Endothelial cell of umbilical vein (primary cell): ENCODE measurements at regions of chr18 and their contacts with region 1.

Region 1: DNA sequence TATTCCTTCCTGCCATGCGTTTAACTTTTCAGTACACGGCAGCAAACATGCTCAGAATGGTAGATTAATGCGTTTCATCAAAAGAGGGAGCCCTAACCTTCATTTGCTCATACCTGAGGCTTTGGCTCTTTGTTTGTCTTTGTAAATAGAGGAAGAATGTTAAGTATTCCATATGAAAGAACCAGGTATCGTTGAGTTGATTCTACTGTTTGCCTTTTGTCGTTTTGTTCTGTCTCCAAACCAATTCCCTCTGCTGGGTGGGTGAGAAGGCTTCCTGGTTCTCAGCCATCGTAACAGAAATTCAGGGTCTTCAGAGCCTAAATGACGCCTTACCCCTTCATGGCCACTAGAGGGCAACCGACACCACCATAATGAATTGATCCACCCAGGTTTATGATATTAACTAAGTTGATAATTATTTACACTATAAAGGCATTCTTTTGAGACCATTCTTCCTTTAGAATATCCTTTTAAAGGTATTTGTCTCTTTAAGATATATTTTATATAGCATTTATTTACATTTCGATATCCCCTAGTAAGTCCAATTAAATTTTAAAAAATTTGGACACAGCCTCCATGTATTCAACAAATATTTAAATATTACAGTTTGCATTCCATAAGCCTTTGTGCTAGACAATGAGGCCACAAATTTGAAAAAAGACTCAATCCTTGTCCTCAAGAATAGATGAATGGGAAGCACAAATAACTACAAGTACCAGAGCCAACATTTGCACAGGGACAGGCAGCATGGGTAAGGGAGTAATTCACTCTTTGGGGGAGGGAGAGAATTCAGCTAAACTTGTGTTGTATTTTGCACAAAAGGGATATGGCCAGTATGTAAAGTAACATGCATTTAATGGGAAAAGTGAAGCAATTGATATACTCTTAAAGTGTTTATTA is 48.1 kb downstream of the TIMM21 start:
- DNase-seq: peak; percentile 78
- H3K4me3 ChIP-seq: peak overlapping the region in 2 of 3 experiments; percentile 14 to 48
- H3K27ac ChIP-seq: no peak overlapping the region
- H3K4me1 ChIP-seq: no peaks in the 10 kb centered on the region
- H3K27me3 ChIP-seq: peaks cover 0 to 3% of the 10 kb centered on the region in 2 experiments
- CTCF ChIP-seq: peak; percentile 62 to 86
- POLR2A ChIP-seq: no peak

Region 2: DNA sequence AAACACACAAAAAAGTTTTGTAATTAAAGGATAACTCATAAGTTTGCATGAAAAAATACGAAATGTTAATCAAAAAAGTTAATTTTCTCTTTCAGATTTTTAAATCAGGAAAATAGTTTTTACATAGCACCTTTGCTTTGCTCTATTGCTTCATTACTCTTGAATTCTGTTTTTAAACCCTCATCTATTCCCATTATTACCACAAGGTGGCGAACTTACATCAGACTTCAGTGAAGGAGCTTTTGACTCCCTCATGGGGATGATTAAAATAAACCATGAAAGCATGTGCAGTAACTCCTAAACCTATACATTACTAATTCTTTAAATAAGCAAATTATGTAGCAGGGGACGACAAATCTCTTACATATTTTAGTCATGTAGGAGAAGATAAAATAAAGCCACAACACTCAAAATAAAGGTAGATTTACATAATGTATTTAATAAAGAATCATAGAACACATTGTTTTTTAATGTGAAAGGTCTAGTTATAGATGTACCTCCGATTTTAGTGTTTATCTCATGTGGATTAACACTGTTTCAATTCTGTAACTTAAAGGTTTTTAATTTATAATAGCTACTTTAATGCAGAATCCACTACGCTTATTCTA is 1433.9 kb before region 1 on chr18:
- CTCF ChIA-PET with region 1: interaction called, 3 read pairs
- POLR2A ChIA-PET with region 1: no interaction called
- dilution Hi-C with region 1: no loop called
- intact Hi-C with region 1: loop called (anchors 1 kb)
- DNase-seq: peak; percentile 36
- H3K4me3 ChIP-seq: no peak overlapping the region
- H3K27ac ChIP-seq: no peak overlapping the region
- H3K4me1 ChIP-seq: no peaks in the 10 kb centered on the region
- H3K27me3 ChIP-seq: no peaks in the 10 kb centered on the region
- CTCF ChIP-seq: peak; percentile 33 to 42
- POLR2A ChIP-seq: no peak

Region 3: DNA sequence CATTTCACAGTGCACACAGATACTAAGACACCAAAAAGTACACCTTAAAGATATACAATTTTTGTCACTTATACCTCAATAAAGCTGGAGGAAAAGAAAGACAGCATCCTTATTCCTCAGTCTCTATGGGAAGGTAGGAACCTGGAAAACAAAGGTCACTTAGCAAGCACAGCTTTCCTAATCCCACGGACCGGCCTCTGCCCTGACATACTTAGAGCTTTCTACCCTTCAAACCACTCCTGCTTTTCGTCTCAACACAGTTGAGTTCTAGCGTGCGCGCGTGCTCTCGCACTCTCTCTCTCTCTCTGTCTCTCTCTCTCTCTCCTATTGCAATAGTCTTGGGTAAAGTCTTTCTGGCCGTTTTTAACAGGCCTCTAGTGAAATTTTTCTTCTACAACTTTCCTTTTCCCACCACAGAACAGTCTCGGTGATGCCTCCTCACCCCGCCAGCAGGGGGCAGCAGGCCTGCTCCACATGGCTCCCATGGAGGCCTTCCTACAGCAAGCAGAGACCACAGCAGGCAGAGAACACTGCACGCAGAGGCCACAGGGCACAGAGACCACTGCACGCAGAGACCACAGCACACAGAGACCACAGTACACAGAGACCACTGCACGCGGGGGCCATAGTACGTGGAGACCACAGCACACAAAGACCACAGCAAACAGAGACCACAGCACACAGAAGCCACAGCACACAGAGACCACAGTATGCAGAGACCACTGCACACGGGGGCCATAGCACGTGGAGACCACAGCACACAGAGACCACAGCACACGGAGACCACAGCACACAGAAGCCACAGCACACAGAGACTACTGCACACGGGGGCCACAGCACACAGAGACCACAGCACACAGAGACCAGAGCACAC is 155.8 kb before region 1 on chr18:
- CTCF ChIA-PET with region 1: no interaction called
- POLR2A ChIA-PET with region 1: no interaction called
- dilution Hi-C with region 1: no loop called
- intact Hi-C with region 1: no loop called
- DNase-seq: no peak
- H3K4me3 ChIP-seq: no peak overlapping the region
- H3K27ac ChIP-seq: no peak overlapping the region
- H3K4me1 ChIP-seq: no peaks in the 10 kb centered on the region
- H3K27me3 ChIP-seq: no peaks in the 10 kb centered on the region
- CTCF ChIP-seq: no peak
- POLR2A ChIP-seq: no peak

Region 4: GRCh38 chr18:74139411-74139810 is 57.1 kb before region 1 on chr18:
- CTCF ChIA-PET with region 1: no interaction called
- POLR2A ChIA-PET with region 1: no interaction called
- dilution Hi-C with region 1: no loop called
- intact Hi-C with region 1: no loop called
- DNase-seq: no peak
- H3K4me3 ChIP-seq: no peak overlapping the region
- H3K27ac ChIP-seq: no peak overlapping the region
- H3K4me1 ChIP-seq: no peaks in the 10 kb centered on the region
- H3K27me3 ChIP-seq: no peaks in the 10 kb centered on the region
- CTCF ChIP-seq: no peak
- POLR2A ChIP-seq: no peak

Region 5: GRCh38 chr18:74217476-74218143 is 21.1 kb after region 1 on chr18:
- CTCF ChIA-PET with region 1: no interaction called
- POLR2A ChIA-PET with region 1: no interaction called
- dilution Hi-C with region 1: no loop called
- intact Hi-C with region 1: no loop called
- DNase-seq: no peak
- H3K4me3 ChIP-seq: no peak overlapping the region
- H3K27ac ChIP-seq: no peak overlapping the region
- H3K4me1 ChIP-seq: no peaks in the 10 kb centered on the region
- H3K27me3 ChIP-seq: no peaks in the 10 kb centered on the region
- CTCF ChIP-seq: no peak
- POLR2A ChIP-seq: no peak

Region 6: GRCh38 chr18:74337155-74337911 is 140.9 kb after region 1 on chr18:
- CTCF ChIA-PET with region 1: interaction called, 130 read pairs
- POLR2A ChIA-PET with region 1: no interaction called
- dilution Hi-C with region 1: no loop called
- intact Hi-C with region 1: loop called (anchors 1 kb)
- DNase-seq: no peak
- H3K4me3 ChIP-seq: no peak overlapping the region
- H3K27ac ChIP-seq: no peak overlapping the region
- H3K4me1 ChIP-seq: no peaks in the 10 kb centered on the region
- H3K27me3 ChIP-seq: peaks cover 0 to 8% of the 10 kb centered on the region in 2 experiments
- CTCF ChIP-seq: no peak
- POLR2A ChIP-seq: no peak

Region 7: GRCh38 chr18:74476140-74476539 is 279.7 kb after region 1 on chr18:
- CTCF ChIA-PET with region 1: no interaction called
- POLR2A ChIA-PET with region 1: no interaction called
- dilution Hi-C with region 1: no loop called
- intact Hi-C with region 1: loop called (anchors 5 kb)
- DNase-seq: peak; percentile 6
- H3K4me3 ChIP-seq: no peak overlapping the region
- H3K27ac ChIP-seq: no peak overlapping the region
- H3K4me1 ChIP-seq: no peaks in the 10 kb centered on the region
- H3K27me3 ChIP-seq: peaks cover 0 to 11% of the 10 kb centered on the region in 2 experiments
- CTCF ChIP-seq: peak; percentile 38 to 63
- POLR2A ChIP-seq: no peak